ENCODE measurements at regions of chr16 and their contacts with region 1.

Region 1: GRCh38 chr16:58365623-58366022 is 26.6 kb upstream of the GINS3 start:
- DNase-seq: no peak
- ATAC-seq: no peak
- H3K4me3 Mint-ChIP-seq: no peak overlapping the region
- H3K27ac Mint-ChIP-seq: no peak overlapping the region
- H3K4me1 Mint-ChIP-seq: no peaks in the 10 kb centered on the region
- H3K27me3 Mint-ChIP-seq: peaks cover 19% of the 10 kb centered on the region
- CTCF ChIP-seq: no peak

Region 2: DNA sequence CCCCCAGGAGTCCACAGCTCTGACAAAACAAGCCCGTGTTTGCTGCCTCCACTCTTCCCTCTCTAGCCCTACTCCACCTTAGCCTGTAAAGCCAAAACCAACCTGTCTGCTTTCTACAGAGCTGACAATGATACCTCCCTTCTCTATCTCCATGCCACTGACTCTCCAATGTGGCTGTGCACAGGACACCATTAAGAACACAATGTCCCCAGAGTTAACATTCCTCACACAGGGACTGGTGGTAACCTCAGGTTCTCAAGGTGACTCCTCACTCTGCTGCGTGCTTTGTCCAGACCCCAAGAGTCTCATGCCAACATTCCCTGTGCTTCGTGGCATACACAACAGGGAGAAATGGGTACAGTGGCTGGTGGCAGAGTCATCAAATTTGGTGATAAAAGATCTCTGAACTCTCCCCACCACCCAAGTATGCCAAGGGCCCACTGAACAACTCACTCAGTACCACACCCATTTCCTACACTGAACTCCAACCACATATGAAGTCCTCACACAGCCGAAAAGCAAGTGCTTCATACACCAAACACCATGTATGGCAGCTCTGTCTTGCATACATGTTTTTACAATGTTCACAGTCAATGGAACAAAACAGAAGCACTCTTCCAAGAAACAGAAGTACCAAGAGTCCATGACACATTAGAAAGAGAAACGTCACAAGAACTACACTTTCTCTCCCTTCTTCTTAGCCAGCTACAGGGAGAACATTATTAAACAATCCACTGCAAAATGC is 188.8 kb before region 1 on chr16:
- CTCF ChIA-PET with region 1: no interaction called
- POLR2A ChIA-PET with region 1: no interaction called
- intact Hi-C with region 1: no loop called
- DNase-seq: no peak
- ATAC-seq: no peak
- H3K4me3 Mint-ChIP-seq: no peak overlapping the region
- H3K27ac Mint-ChIP-seq: no peak overlapping the region
- H3K4me1 Mint-ChIP-seq: no peaks in the 10 kb centered on the region
- H3K27me3 Mint-ChIP-seq: no peaks in the 10 kb centered on the region
- CTCF ChIP-seq: no peak

Region 3: GRCh38 chr16:58292886-58293285 is 72.7 kb before region 1 on chr16:
- CTCF ChIA-PET with region 1: no interaction called
- POLR2A ChIA-PET with region 1: no interaction called
- intact Hi-C with region 1: no loop called
- DNase-seq: no peak
- ATAC-seq: no peak
- H3K4me3 Mint-ChIP-seq: no peak overlapping the region
- H3K27ac Mint-ChIP-seq: no peak overlapping the region
- H3K4me1 Mint-ChIP-seq: no peaks in the 10 kb centered on the region
- H3K27me3 Mint-ChIP-seq: peaks cover under 1% of the 10 kb centered on the region
- CTCF ChIP-seq: no peak

Region 4: DNA sequence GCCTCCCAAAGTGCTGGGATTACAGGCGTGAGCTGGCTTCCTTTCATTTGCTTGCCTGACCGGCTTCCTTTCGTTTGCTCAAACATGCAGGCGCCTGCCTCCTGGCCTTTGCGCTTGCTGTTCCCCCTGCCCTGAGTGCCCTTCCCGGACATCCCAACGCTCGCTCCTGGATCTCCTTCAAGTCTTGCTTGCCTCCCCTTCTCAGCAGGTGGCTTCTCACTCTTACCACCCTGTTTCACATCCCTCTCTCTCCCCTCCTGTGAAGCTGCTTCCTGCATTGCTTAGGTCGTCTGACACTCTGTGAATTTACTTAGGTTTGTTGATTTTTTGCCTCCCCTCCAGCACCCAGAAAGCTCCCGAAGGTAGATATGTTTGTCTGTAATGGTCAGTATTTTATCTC is 108.7 kb after region 1 on chr16:
- CTCF ChIA-PET with region 1: no interaction called
- POLR2A ChIA-PET with region 1: interaction called, 13 read pairs
- intact Hi-C with region 1: no loop called
- DNase-seq: no peak
- ATAC-seq: no peak
- H3K4me3 Mint-ChIP-seq: no peak overlapping the region
- H3K27ac Mint-ChIP-seq: no peak overlapping the region
- H3K4me1 Mint-ChIP-seq: peaks cover 4% of the 10 kb centered on the region
- H3K27me3 Mint-ChIP-seq: peaks cover 7% of the 10 kb centered on the region
- CTCF ChIP-seq: no peak

Measured in activated B cell treated with CpG ODN at 0.5 μM for 24 hours (primary cell).